ENCODE measurements at regions of chr6 and their contacts with region 1.

Region 1: GRCh38 chr6:116096979-116097816 is 3.5 kb upstream of the NT5DC1 start:
- DNase-seq: no peak

Region 2: GRCh38 chr6:116010790-116011401 is 86.3 kb before region 1 on chr6:
- intact Hi-C with region 1: loop called (anchors 2 kb)
- DNase-seq: peak; percentile 31 to 94 (median 82)

Measured in head of caudate nucleus (tissue), 42 donors.